ENCODE measurements at regions of chr13 and their contacts with region 1.

Region 1: DNA sequence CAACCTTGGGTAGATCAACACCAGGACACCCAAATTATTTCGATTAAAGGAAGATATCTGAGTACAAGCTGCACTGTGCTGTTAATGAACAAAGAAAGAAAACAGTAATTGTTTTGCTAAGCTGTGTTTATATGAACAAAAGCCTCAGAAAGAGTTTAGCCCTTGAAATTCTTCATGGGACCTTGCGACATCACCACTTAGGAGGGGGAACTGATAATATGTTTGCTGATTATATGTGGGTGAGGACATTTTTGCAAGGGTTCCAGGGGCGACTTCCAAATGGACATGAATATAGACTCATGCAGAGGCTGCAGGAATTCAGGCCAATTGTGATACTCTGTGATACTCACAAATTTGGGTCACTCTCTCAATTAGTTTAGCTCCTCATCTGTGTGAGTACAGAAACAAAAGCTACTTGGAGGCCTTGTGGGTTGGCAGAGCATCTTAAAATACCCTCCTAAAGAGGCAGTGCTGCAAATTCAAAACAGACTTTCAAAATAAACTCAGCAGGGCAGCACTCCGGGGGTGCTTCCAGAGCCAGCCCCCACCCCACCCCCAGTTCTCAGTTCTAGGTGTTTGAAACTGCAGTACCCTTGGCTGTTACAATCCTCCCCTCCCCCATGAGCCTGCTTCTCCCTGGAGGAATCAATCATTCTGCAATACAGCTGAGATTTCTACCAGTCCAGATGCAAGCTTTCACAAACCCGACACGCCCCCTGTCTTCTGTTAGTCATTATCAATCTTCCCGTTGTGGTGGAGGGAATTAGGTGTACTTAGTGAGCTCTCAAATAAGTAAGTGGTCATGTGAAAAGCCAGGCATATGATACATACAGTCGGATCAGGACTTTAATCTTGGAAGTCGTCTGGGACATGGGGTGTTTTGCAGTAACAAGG is 97.0 kb upstream of the MBNL2 start:
- DNase-seq: no peak
- H3K4me3 Mint-ChIP-seq: no peak overlapping the region
- H3K27ac Mint-ChIP-seq: no peak overlapping the region
- H3K4me1 Mint-ChIP-seq: peaks cover 20% of the 10 kb centered on the region
- H3K27me3 Mint-ChIP-seq: peaks cover 16% of the 10 kb centered on the region

Region 2: DNA sequence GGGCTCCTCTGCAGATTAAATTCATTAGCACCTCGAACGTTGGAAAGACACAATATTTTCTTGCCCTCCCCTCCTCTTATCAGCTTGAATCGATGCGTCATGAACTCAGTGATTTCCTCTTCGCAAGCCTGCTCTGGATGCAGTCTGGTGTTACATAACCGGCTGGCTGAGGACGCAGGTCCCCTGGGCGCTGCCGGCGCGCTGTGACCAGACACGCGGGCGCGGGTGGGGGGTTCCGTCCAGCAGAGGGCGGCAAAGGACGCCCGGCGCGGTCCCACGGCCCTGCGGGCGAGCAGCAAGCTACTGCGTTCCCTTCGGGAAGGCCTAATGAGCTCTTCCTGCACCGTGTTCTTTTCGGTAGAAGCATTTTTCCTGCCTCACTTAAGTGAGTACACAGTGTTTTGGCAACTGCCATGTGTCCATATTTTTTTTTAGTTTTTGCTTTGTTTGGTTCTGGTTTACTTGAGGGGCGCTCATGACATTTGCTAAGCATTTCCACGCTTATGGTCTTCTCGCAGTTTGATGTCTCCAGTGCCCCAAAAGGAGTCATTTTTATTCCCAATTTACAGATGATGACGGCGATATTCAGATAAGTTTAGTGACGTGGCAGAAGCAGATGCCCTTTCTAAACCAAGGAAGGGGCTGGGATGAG is 15.2 kb before region 1 on chr13:
- intact Hi-C with region 1: no loop called
- DNase-seq: peak; percentile 67
- H3K4me3 Mint-ChIP-seq: no peak overlapping the region
- H3K27ac Mint-ChIP-seq: no peak overlapping the region
- H3K4me1 Mint-ChIP-seq: peaks cover 8% of the 10 kb centered on the region
- H3K27me3 Mint-ChIP-seq: peaks cover 17% of the 10 kb centered on the region

Region 3: GRCh38 chr13:97141564-97142005 is 16.4 kb after region 1 on chr13:
- intact Hi-C with region 1: loop called (anchors 1 kb)
- DNase-seq: no peak
- H3K4me3 Mint-ChIP-seq: no peak overlapping the region
- H3K27ac Mint-ChIP-seq: peak overlapping the region; percentile 7
- H3K4me1 Mint-ChIP-seq: peaks cover 13% of the 10 kb centered on the region
- H3K27me3 Mint-ChIP-seq: peaks cover 10% of the 10 kb centered on the region

Region 4: GRCh38 chr13:97221989-97222700 is 97.0 kb after region 1 on chr13 and contains the start of gene MBNL2:
- intact Hi-C with region 1: loop called (anchors 1 kb)
- DNase-seq: peak; percentile 80
- H3K4me3 Mint-ChIP-seq: peak within 1 kb of the TSS; percentile 87
- H3K27ac Mint-ChIP-seq: peak within 1 kb of the TSS; percentile 82
- H3K4me1 Mint-ChIP-seq: peaks cover 49% of the 10 kb centered on the region
- H3K27me3 Mint-ChIP-seq: no peaks in the 10 kb centered on the region
- total RNA-seq, gene MBNL2: 20.7 and 24.2 TPM in 2 replicates

Region 5: GRCh38 chr13:97257800-97258799 is 132.9 kb after region 1 on chr13:
- intact Hi-C with region 1: loop called (anchors 1 kb)
- DNase-seq: no peak
- H3K4me3 Mint-ChIP-seq: peak overlapping the region; percentile 21
- H3K27ac Mint-ChIP-seq: peak overlapping the region; percentile 87
- H3K4me1 Mint-ChIP-seq: peaks cover 84% of the 10 kb centered on the region
- H3K27me3 Mint-ChIP-seq: no peaks in the 10 kb centered on the region

Region 6: GRCh38 chr13:97275265-97275664 is 150.1 kb after region 1 on chr13:
- intact Hi-C with region 1: no loop called
- DNase-seq: no peak
- H3K4me3 Mint-ChIP-seq: no peak overlapping the region
- H3K27ac Mint-ChIP-seq: no peak overlapping the region
- H3K4me1 Mint-ChIP-seq: peaks cover 7% of the 10 kb centered on the region
- H3K27me3 Mint-ChIP-seq: no peaks in the 10 kb centered on the region

Region 7: GRCh38 chr13:97295283-97296182 is 170.4 kb after region 1 on chr13:
- intact Hi-C with region 1: loop called (anchors 1 kb)
- DNase-seq: no peak
- H3K4me3 Mint-ChIP-seq: no peak overlapping the region
- H3K27ac Mint-ChIP-seq: no peak overlapping the region
- H3K4me1 Mint-ChIP-seq: peaks cover 7% of the 10 kb centered on the region
- H3K27me3 Mint-ChIP-seq: peaks cover 1% of the 10 kb centered on the region

Region 8: GRCh38 chr13:97367016-97367822 is 242.1 kb after region 1 on chr13:
- intact Hi-C with region 1: no loop called
- DNase-seq: no peak
- H3K4me3 Mint-ChIP-seq: no peak overlapping the region
- H3K27ac Mint-ChIP-seq: no peak overlapping the region
- H3K4me1 Mint-ChIP-seq: peaks cover 16% of the 10 kb centered on the region
- H3K27me3 Mint-ChIP-seq: no peaks in the 10 kb centered on the region